ENCODE measurements at regions of chr2 and their contacts with region 1.

Region 1: GRCh38 chr2:29215739-29216608 is 100.8 kb downstream of the CLIP4 start:
- DNase-seq: no peak
- H3K4me3 ChIP-seq: no peak overlapping the region
- H3K27ac ChIP-seq: no peak overlapping the region
- H3K4me1 ChIP-seq: no peaks in the 10 kb centered on the region
- H3K27me3 ChIP-seq: no peaks in the 10 kb centered on the region
- CTCF ChIP-seq: no peak
- POLR2A ChIP-seq: no peak

Region 2: DNA sequence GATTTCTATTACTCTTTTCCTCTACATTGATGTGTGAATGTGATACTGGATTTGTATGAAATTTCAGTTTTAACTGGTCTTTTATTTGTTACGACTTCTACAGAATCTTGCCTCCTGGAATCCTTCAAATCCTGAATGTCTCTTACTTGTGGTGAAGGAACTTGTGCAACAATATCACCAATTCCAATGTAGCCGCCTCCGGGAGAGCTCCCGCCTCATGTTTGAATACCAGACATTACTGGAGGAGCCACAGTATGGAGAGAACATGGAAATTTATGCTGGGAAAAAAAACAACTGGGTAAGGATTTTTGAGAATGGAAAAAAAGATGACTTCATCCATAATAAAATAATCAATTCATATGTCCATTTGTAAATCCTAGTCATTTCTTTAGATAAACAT is 1190.9 kb before region 1 on chr2:
- intact Hi-C with region 1: loop called (anchors 5 kb)
- DNase-seq: no peak
- H3K4me3 ChIP-seq: no peak overlapping the region
- H3K27ac ChIP-seq: no peak overlapping the region
- H3K4me1 ChIP-seq: no peaks in the 10 kb centered on the region
- H3K27me3 ChIP-seq: no peaks in the 10 kb centered on the region
- CTCF ChIP-seq: no peak
- POLR2A ChIP-seq: no peak

Region 3: DNA sequence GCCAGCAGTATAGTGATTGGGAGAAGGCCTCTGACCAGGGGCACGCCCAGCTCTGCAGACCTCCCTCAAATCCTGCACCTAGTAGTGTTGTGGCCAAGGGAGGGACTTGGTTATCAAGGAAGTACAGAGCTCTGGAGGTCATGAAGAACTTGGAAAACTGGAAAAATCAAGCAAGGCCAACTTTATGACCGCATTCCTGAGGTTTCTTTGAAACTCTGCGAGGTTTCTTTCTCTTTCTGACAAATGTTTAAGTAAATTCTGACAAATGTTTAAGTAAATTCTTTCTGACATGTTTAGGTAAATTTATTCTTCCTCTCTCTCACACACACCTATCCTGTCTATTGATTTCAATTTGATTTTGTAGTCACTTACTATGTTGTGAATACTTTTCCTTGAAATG is 69.8 kb before region 1 on chr2:
- intact Hi-C with region 1: no loop called
- DNase-seq: no peak
- H3K4me3 ChIP-seq: no peak overlapping the region
- H3K27ac ChIP-seq: no peak overlapping the region
- H3K4me1 ChIP-seq: no peaks in the 10 kb centered on the region
- H3K27me3 ChIP-seq: no peaks in the 10 kb centered on the region
- CTCF ChIP-seq: no peak
- POLR2A ChIP-seq: no peak

Region 4: DNA sequence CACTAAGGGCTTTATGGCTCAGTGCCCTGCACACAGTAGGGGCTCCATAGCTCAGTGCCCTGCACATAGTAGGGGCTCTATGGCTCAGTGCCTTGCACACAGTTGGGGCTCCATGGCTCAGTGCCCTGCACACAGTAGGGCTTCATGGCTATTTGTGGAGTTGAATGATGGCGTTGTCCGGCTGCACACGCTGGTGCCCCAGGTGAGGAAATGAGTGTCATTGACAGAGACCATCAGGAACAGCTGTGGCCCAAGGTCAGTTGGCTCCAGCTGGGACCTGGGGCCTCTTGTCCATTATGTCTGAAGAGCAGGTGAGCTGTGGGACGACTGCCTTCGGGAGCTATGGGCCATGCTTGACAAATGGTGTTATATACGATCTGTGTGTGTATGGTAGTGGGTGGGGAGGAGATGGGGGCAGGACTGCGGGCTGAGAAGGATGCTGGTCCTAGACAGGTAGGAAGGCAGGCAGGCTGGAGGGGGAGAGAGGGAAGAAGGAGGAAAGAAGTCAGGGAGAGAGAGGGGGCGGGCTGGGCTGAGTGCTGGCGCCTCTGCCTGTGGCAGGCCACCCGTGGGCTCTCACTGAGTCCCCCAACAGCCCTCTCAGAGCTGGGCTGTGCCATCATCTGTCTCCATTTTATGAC is 29.9 kb after region 1 on chr2:
- intact Hi-C with region 1: loop called (anchors 1 kb)
- DNase-seq: no peak
- H3K4me3 ChIP-seq: no peak overlapping the region
- H3K27ac ChIP-seq: no peak overlapping the region
- H3K4me1 ChIP-seq: no peaks in the 10 kb centered on the region
- H3K27me3 ChIP-seq: no peaks in the 10 kb centered on the region
- CTCF ChIP-seq: no peak
- POLR2A ChIP-seq: no peak